SK-N-SH (cell line): ENCODE measurements at regions of chr11 and their contacts with region 1.

Region 1: GRCh38 chr11:2778630-2779498 is 79.1 kb upstream of the KCNQ1OT1 start:
- DNase-seq: peak; percentile 93
- H3K4me3 ChIP-seq: peak overlapping the region in 1 of 2 experiments; percentile 4; a peak in 1 of 4 replicates
- H3K27ac ChIP-seq: peak overlapping the region; percentile 72 to 99
- H3K4me1 ChIP-seq: peaks cover 10 to 73% of the 10 kb centered on the region in 2 experiments; a peak in 3 of 4 replicates
- H3K27me3 ChIP-seq: no peaks in the 10 kb centered on the region
- CTCF ChIP-seq: no peak
- EP300 ChIP-seq: peak in 1 of 2 experiments; percentile 58; a peak in 2 of 4 replicates
- RAD21 ChIP-seq: peak; percentile 62

Region 2: DNA sequence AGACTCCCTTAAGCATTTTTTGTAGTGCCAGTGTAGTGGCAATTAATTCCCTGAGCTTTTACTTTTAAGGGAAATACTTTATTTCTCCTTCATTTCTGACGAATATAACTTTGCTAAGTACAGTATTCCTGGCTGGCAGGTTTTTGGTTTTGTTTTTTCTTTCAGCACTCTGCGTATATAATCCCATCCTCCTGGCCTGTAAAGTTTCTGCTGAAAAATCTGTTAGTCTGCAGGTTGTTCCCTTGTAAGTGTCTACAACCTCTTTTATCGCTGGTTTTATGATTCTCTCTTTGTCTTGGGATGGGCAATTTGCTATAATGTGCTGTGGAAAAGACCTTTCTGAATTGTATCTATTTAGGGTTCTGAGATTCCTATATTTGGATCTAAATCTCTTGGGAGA is 135.1 kb before region 1 on chr11:
- CTCF ChIA-PET with region 1: no interaction called
- POLR2A ChIA-PET with region 1: no interaction called
- DNase-seq: no peak
- H3K4me3 ChIP-seq: no peak overlapping the region
- H3K27ac ChIP-seq: no peak overlapping the region
- H3K4me1 ChIP-seq: no peaks in the 10 kb centered on the region
- H3K27me3 ChIP-seq: no peaks in the 10 kb centered on the region
- CTCF ChIP-seq: no peak
- EP300 ChIP-seq: no peak
- RAD21 ChIP-seq: no peak

Region 3: GRCh38 chr11:2699531-2700414 is 79.1 kb before region 1 on chr11 and contains the start of gene KCNQ1OT1:
- CTCF ChIA-PET with region 1: interaction called, 3 read pairs
- POLR2A ChIA-PET with region 1: interaction called, 16 read pairs
- DNase-seq: peak; percentile 94
- H3K4me3 ChIP-seq: peak within 1 kb of the TSS; percentile 67 to 70
- H3K27ac ChIP-seq: peak within 1 kb of the TSS; percentile 60 to 87
- H3K4me1 ChIP-seq: peaks cover 0 to 29% of the 10 kb centered on the region in 2 experiments; a peak in 1 of 4 replicates
- H3K27me3 ChIP-seq: no peaks in the 10 kb centered on the region
- CTCF ChIP-seq: 0 out of 2 replicates have a peak, but pooled peaks have one; percentile 9
- EP300 ChIP-seq: no peak
- RAD21 ChIP-seq: no peak
- polyA plus RNA-seq, gene KCNQ1OT1: 0.03 and 0.05 TPM in 2 replicates

Region 4: DNA sequence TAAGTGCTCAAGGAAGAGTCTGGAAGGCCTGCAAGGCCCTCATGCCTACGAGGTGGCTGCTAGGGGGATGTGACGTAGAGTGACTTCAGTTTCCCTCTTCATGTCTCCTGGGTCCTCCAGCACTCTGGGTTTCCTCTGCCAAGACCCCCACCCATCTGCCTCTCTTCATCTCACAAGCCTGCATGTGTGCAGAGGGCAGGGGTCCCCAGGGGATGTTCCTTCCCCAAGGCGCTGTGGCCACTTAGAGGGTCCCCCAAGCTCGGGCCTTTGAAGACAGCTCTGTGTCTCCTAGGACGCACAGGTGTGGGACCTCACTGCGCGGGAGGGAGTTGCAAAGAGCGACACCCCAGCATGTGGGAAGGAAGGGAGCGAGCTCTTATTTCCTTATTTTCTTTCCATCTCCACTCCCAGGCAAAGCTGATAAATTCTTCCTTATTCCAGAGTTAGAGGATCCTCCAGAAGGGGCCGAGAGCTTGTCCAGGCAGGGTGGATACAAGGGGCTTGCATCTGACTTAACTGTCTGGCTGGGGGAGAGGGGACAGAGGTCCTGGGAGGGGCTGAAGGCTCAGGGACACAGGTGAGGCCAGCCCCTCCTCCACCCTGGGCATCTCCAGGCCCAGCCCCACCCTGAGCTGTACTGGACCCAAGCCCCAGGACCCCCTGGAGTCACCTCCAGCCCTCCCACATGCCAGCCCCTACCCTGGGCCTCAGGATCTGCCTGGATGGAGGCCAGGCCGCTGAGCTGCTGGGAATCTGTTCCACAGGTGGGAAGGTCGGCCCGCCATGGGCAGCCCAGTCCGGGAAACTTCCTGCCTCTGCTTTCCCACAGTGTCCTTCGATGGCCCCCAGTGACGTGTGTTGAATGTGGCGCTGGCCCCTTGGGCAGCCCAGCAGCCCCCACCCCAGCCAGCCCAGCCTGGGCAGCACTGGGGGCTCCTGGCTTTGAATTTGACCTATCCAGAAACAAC is 19.4 kb before region 1 on chr11:
- CTCF ChIA-PET with region 1: no interaction called
- POLR2A ChIA-PET with region 1: no interaction called
- DNase-seq: no peak
- H3K4me3 ChIP-seq: no peak overlapping the region
- H3K27ac ChIP-seq: no peak overlapping the region
- H3K4me1 ChIP-seq: peaks cover 0 to 2% of the 10 kb centered on the region in 2 experiments; a peak in 1 of 4 replicates
- H3K27me3 ChIP-seq: no peaks in the 10 kb centered on the region
- CTCF ChIP-seq: no peak
- EP300 ChIP-seq: no peak
- RAD21 ChIP-seq: no peak

Region 5: GRCh38 chr11:2992234-2992996 is 213.6 kb after region 1 on chr11 and contains the start of gene NAP1L4:
- CTCF ChIA-PET with region 1: no interaction called
- POLR2A ChIA-PET with region 1: no interaction called
- DNase-seq: peak; percentile 99
- H3K4me3 ChIP-seq: peak within 1 kb of the TSS; percentile 89 to 97
- H3K27ac ChIP-seq: peak within 1 kb of the TSS; percentile 81 to 82
- H3K4me1 ChIP-seq: peaks cover 9 to 26% of the 10 kb centered on the region in 2 experiments; a peak in 3 of 4 replicates
- H3K27me3 ChIP-seq: no peaks in the 10 kb centered on the region
- CTCF ChIP-seq: no peak
- EP300 ChIP-seq: no peak
- RAD21 ChIP-seq: no peak
- polyA plus RNA-seq, gene NAP1L4: 82.5 and 104 TPM in 2 replicates